ENCODE measurements at regions of chr20 and their contacts with region 1.

Region 1: GRCh38 chr20:59141787-59142581 is 21.6 kb upstream of the ZNF831 start:
- DNase-seq: no peak
- ATAC-seq: no peak
- H3K4me3 ChIP-seq: no peak overlapping the region
- H3K27ac ChIP-seq: no peak overlapping the region
- H3K4me1 ChIP-seq: no peaks in the 10 kb centered on the region
- H3K27me3 ChIP-seq: peaks cover 8% of the 10 kb centered on the region
- CTCF ChIP-seq: no peak

Region 2: GRCh38 chr20:59124296-59125029 is 17.5 kb before region 1 on chr20:
- CTCF ChIA-PET with region 1: interaction called, 12 read pairs
- POLR2A ChIA-PET with region 1: no interaction called
- in situ Hi-C with region 1: no loop called
- intact Hi-C with region 1: no loop called
- DNase-seq: no peak
- ATAC-seq: no peak
- H3K4me3 ChIP-seq: no peak overlapping the region
- H3K27ac ChIP-seq: no peak overlapping the region
- H3K4me1 ChIP-seq: no peaks in the 10 kb centered on the region
- H3K27me3 ChIP-seq: peaks cover 4% of the 10 kb centered on the region
- CTCF ChIP-seq: no peak

Measured in Panc1 (cell line).